Endothelial cell of umbilical vein (primary cell): ENCODE measurements at regions of chr14 and their contacts with region 1.

Region 1: DNA sequence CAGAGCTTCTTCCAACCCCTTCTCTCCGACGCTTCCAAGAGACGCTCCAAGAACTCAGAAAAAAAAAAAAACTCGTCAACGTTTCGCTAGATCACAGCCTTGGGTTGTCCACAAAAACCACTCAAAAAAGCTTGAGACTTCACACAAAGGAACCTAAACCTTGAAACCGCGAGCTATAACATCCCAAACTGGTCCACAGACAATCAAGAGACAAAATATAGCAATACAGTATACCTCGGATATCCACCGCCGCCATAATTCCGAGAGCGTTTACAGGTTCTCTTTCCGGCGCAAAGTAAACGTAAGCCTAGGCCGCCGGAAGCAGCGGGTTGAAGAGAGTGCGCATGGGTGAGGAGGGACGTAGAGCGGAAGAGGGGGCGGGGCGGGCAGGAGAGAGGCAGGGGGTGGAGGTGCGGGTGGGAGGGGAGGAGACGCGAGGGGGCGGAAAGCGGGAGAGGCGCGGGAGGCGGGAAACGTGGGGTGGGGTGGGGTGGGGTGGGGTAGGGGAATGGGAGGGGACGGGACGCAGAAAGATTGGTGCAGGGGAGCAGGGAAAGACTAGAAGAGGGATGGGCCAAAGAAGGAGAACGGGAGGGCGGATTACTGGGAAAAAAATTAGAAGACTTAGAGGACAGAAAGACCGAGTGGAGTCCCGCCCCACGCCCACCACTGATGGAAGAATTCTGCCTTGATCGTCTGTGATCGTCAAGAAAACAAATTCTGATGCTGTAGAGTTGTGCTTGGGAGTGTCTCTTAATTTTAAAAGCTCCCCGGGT is at the start of gene MED6:
- DNase-seq: peak; percentile 91
- H3K4me3 ChIP-seq: peak within 1 kb of the TSS; percentile 86 to 98 (median 92)
- H3K27ac ChIP-seq: peak within 1 kb of the TSS; percentile 78
- H3K4me1 ChIP-seq: peaks cover 13% of the 10 kb centered on the region
- H3K27me3 ChIP-seq: no peaks in the 10 kb centered on the region
- CTCF ChIP-seq: no peak
- POLR2A ChIP-seq: peak; percentile 29
- total RNA-seq, gene MED6: 38.8 and 41.5 TPM in 2 replicates

Region 2: GRCh38 chr14:70498191-70498590 is 102.4 kb before region 1 on chr14:
- CTCF ChIA-PET with region 1: no interaction called
- POLR2A ChIA-PET with region 1: no interaction called
- dilution Hi-C with region 1: no loop called
- intact Hi-C with region 1: no loop called
- DNase-seq: no peak
- H3K4me3 ChIP-seq: no peak overlapping the region
- H3K27ac ChIP-seq: no peak overlapping the region
- H3K4me1 ChIP-seq: no peaks in the 10 kb centered on the region
- H3K27me3 ChIP-seq: no peaks in the 10 kb centered on the region
- CTCF ChIP-seq: no peak
- POLR2A ChIP-seq: no peak

Region 3: GRCh38 chr14:70555890-70556289 is 44.7 kb before region 1 on chr14:
- CTCF ChIA-PET with region 1: no interaction called
- POLR2A ChIA-PET with region 1: no interaction called
- dilution Hi-C with region 1: no loop called
- intact Hi-C with region 1: no loop called
- DNase-seq: no peak
- H3K4me3 ChIP-seq: no peak overlapping the region
- H3K27ac ChIP-seq: no peak overlapping the region
- H3K4me1 ChIP-seq: no peaks in the 10 kb centered on the region
- H3K27me3 ChIP-seq: no peaks in the 10 kb centered on the region
- CTCF ChIP-seq: no peak
- POLR2A ChIP-seq: no peak

Region 4: GRCh38 chr14:70640938-70641547 is 40.5 kb after region 1 on chr14:
- CTCF ChIA-PET with region 1: no interaction called
- POLR2A ChIA-PET with region 1: no interaction called
- dilution Hi-C with region 1: no loop called
- intact Hi-C with region 1: loop called (anchors 2 kb)
- DNase-seq: peak; percentile 6
- H3K4me3 ChIP-seq: peak overlapping the region in 1 of 3 experiments; percentile 53
- H3K27ac ChIP-seq: no peak overlapping the region
- H3K4me1 ChIP-seq: no peaks in the 10 kb centered on the region
- H3K27me3 ChIP-seq: peaks cover 34 to 44% of the 10 kb centered on the region in 2 experiments
- CTCF ChIP-seq: no peak
- POLR2A ChIP-seq: no peak